ENCODE measurements at regions of chr14 and their contacts with region 1.

Region 1: DNA sequence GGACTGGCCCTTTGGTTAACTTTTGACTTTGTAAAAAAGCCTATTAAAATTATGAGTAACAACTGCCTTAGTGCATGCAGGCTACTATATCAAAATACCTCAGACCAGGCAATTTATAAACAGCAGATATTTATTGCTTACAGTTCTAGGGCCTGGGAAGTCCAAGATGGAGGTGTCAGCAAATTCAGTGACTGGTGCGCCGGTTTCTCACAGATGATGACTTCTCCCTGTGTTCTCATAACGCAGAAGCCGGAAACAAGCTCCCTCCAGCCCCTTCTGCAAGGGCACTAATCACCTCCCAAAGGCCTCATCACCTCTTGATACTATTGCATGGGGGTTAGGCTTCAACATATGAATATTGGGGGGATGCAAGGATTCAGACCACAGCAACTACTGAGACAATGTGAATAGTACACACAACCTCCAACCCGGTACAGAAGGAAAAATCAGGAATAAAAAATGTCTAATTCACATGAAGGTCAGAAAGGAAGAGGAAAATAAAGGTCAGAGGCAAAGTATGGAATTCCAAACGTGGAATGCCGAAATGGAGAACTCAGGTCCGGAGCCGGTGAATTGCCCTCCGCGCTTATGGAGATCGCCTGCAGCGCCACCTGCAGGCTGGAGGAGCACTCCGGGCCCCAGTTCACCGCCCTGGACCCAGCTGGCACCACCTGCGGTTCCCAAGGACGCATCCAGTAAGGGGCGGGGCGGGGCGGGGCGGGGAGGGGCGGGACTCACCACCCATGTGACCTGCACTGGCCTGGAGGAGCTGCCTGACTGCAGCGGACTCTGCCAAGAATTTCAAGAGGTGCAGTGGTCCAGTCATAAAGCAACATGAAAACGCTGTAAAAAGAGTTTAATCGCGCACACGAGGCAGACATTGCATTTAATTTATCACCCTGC is 203.4 kb downstream of the KIF26A start:
- DNase-seq: peak; percentile 89

Region 2: GRCh38 chr14:104224506-104225277 is 117.1 kb before region 1 on chr14:
- in situ Hi-C with region 1: no loop called
- DNase-seq: peak; percentile 49

Region 3: GRCh38 chr14:104604459-104605449 is 263.0 kb after region 1 on chr14 and contains the start of gene TMEM179:
- in situ Hi-C with region 1: loop called (anchors 25 kb)
- DNase-seq: no peak
- total RNA-seq, gene TMEM179: 0.32 and 0.88 TPM in 2 replicates